Activated naive CD4-positive, alpha-beta T cell treated with anti-CD3 and anti-CD28 coated beads for 36 hours (primary cell): ENCODE measurements at regions of chr15 and their contacts with region 1.

Region 1: GRCh38 chr15:58331903-58332675 is 99.7 kb upstream of the LIPC start:
- DNase-seq: peak; percentile 97
- H3K4me3 Mint-ChIP-seq: peak overlapping the region; percentile 39
- H3K27ac Mint-ChIP-seq: peak overlapping the region; percentile 95
- H3K4me1 Mint-ChIP-seq: peaks cover 41% of the 10 kb centered on the region
- H3K27me3 Mint-ChIP-seq: no peaks in the 10 kb centered on the region

Region 2: DNA sequence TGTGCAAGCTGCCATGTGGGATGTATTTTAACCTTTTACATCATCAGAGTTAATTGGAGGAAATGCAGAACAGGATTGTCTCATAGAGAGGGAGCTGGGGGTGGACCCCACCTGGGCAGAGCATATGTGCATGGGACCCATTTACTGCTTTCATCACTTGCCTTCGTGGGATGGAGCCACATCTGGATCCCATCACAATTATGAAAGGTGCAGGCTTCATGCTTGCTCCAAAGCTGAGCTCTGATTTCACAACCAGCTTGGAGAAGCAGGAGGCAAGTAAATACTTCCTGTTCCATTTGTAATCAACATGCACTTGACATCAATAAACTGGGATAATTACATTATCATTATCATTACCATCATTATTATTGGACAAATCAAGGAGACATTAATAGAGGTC is 428.5 kb before region 1 on chr15:
- CTCF ChIA-PET with region 1: no interaction called
- intact Hi-C with region 1: no loop called
- DNase-seq: no peak
- H3K4me3 Mint-ChIP-seq: no peak overlapping the region
- H3K27ac Mint-ChIP-seq: no peak overlapping the region
- H3K4me1 Mint-ChIP-seq: no peaks in the 10 kb centered on the region
- H3K27me3 Mint-ChIP-seq: peaks cover 26% of the 10 kb centered on the region

Region 3: GRCh38 chr15:58249646-58250312 is 82.3 kb before region 1 on chr15:
- CTCF ChIA-PET with region 1: no interaction called
- intact Hi-C with region 1: loop called (anchors 5 kb)
- DNase-seq: peak; percentile 54
- H3K4me3 Mint-ChIP-seq: peak overlapping the region; percentile 21
- H3K27ac Mint-ChIP-seq: peak overlapping the region; percentile 7
- H3K4me1 Mint-ChIP-seq: peaks cover 15% of the 10 kb centered on the region
- H3K27me3 Mint-ChIP-seq: no peaks in the 10 kb centered on the region

Region 4: GRCh38 chr15:58348095-58348812 is 16.2 kb after region 1 on chr15:
- CTCF ChIA-PET with region 1: interaction called, 3 read pairs
- intact Hi-C with region 1: loop called (anchors 1 kb)
- DNase-seq: no peak
- H3K4me3 Mint-ChIP-seq: no peak overlapping the region
- H3K27ac Mint-ChIP-seq: no peak overlapping the region
- H3K4me1 Mint-ChIP-seq: peaks cover 10% of the 10 kb centered on the region
- H3K27me3 Mint-ChIP-seq: no peaks in the 10 kb centered on the region

Region 5: GRCh38 chr15:58383876-58384275 is 51.8 kb after region 1 on chr15:
- CTCF ChIA-PET with region 1: no interaction called
- intact Hi-C with region 1: loop called (anchors 1 kb)
- DNase-seq: peak; percentile 73
- H3K4me3 Mint-ChIP-seq: no peak overlapping the region
- H3K27ac Mint-ChIP-seq: peak overlapping the region; percentile 14
- H3K4me1 Mint-ChIP-seq: peaks cover 17% of the 10 kb centered on the region
- H3K27me3 Mint-ChIP-seq: no peaks in the 10 kb centered on the region

Region 6: DNA sequence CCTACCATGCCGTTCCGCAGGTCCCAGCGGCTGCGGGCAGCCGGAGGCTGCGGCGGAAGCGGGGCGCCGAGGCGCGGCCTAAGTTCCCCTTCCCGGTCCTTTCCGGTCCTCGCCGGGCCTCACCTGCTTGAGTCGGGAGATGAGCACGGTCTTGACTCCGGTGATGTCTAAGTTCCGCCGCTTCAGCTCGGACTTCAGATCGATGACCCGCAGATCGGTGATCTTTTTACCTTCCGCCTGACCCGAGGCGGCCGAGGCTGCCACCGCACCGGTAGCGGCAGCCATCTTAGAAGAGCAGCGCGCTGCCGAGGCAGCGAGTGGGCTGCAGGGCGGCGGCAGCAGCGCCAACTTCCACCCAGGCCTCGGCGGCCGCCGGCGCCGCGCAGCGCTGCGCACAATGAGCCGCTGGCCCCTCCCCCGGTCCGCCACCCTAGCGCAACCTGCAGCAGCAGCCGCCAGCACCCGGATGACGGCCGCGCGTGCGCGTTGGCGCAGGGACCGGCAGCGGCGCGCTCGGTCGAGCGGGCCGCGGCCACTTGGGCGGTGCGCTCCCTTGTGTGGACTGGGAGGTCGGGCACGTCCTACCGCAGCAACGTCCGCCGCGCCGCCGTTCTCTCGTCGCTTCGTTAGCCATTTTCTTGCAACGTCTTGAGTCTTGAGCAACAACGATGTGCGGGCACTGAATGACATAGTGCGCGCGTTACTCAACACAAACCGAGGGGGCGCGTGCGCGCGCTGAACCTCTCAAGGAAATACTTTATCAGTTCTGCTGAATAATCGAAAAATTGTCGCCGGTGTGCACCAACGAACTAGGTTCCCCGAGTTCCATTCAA is 601.4 kb after region 1 on chr15 and contains the start of gene SLTM:
- CTCF ChIA-PET with region 1: no interaction called
- intact Hi-C with region 1: loop called (anchors 5 kb)
- DNase-seq: peak; percentile 92
- H3K4me3 Mint-ChIP-seq: peak within 1 kb of the TSS; percentile 93
- H3K27ac Mint-ChIP-seq: peak within 1 kb of the TSS; percentile 99
- H3K4me1 Mint-ChIP-seq: peaks cover 23% of the 10 kb centered on the region
- H3K27me3 Mint-ChIP-seq: no peaks in the 10 kb centered on the region
- total RNA-seq, gene SLTM: 52.0 to 56.0 TPM

Region 7: GRCh38 chr15:60195611-60196010 is 1863.5 kb after region 1 on chr15:
- CTCF ChIA-PET with region 1: no interaction called
- intact Hi-C with region 1: no loop called
- DNase-seq: no peak
- H3K4me3 Mint-ChIP-seq: no peak overlapping the region
- H3K27ac Mint-ChIP-seq: no peak overlapping the region
- H3K4me1 Mint-ChIP-seq: no peaks in the 10 kb centered on the region
- H3K27me3 Mint-ChIP-seq: peaks cover 21% of the 10 kb centered on the region